Right ventricle myocardium inferior (tissue), 1 donor: ENCODE measurements at regions of chr4 and their contacts with region 1.

Region 1: GRCh38 chr4:24559889-24560288 is 24.5 kb downstream of the DHX15 start:
- DNase-seq: no peak
- ATAC-seq: peak; percentile 53

Region 2: DNA sequence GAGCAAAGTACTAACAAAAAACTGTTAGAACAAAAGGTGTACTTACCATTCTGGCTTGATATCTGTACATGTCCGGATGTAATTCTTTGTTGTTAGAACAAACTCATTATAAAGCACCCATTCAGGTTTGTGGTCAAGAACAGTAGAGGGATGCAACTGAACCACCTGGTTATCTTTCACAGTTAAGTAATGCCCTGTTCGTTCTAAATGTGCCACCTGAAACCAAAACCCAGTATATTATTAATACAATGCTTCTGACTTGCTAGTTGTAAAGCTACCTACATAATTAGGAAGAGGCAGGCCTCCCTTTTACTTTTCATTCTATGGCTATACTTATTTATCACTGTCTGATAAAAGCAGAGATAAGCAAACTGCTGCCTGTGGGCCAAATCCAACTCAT is 30.3 kb before region 1 on chr4:
- intact Hi-C with region 1: loop called (anchors 5 kb)
- DNase-seq: no peak
- ATAC-seq: no peak